ENCODE measurements at regions of chrX and their contacts with region 1.

Region 1: GRCh38 chrX:110060846-110061537 is 58.1 kb downstream of the TMEM164 start:
- DNase-seq: no peak
- H3K4me3 ChIP-seq: no peak overlapping the region
- H3K27ac ChIP-seq: no peak overlapping the region
- H3K4me1 ChIP-seq: no peaks in the 10 kb centered on the region
- H3K27me3 ChIP-seq: no peaks in the 10 kb centered on the region
- CTCF ChIP-seq: no peak

Region 2: DNA sequence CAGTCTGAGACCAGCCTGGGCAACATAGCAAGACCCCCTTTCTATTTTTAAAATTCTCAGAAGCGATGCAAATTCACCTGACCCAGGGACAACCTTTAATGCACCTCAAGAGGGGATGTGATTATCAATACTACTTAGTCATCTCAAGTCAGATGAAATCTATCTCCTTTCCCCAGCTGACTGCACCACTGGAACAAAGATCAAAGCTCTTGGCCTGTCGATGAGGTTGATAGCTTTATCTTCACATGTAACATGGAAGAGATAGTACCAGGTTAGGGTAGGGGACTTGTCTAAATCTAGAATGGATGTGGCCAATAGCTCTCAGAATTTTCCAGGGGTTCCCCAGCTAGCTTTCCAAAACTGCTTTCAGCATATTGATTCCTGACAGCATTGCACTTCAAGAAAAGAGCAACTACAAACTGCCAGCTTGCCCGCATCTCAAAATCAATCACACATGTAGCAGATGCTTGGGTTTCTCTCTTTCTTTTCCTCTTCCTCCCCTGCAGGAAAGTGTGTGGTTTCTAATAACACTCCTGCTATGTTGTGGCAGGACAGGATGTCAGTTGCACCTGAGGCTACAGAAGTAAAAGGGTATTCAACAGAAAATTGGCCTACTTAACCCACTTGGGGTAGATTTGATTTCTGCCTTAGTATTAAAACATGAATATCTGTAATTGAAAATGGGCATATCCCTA is 70.3 kb before region 1 on chrX:
- CTCF ChIA-PET with region 1: no interaction called
- dilution Hi-C with region 1: no loop called
- in situ Hi-C with region 1: no loop called
- intact Hi-C with region 1: no loop called
- DNase-seq: no peak
- H3K4me3 ChIP-seq: no peak overlapping the region
- H3K27ac ChIP-seq: no peak overlapping the region
- H3K4me1 ChIP-seq: peaks cover 4% of the 10 kb centered on the region
- H3K27me3 ChIP-seq: no peaks in the 10 kb centered on the region
- CTCF ChIP-seq: no peak

Region 3: DNA sequence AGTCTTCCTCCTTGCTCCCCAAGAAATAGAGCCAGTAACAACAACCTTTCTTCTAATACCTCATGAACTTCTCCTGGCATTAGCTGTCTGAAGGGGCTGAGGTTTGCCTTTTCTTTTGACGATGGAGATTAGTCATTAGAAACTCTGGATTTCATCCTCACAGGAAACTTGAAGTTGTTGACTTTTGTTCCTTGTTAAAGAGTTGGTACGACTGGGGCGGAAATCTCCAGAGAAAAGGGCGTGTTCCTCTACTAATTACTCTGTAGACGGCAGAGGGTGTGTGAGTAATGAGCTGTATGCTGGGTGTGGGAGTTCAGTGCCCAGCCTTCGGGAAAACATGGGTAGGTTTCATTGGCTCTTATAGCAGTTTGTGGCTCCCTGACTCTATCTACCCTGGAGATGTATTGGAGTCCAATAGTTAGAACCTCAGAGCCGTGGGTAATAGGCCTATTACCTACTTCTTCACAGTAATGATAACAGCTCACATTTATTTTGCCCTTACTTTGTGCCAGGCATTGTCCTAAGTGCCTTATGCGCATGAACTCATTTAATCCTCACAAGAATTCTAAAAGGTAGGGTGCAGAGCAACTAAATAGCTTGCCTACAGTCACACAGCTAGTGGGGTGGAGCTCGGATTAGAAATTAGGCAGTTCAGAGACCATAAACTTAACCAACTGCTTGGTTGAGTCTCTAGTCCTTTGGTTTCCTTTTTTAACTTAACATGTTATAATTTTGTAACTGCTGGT is 34.7 kb before region 1 on chrX:
- CTCF ChIA-PET with region 1: no interaction called
- dilution Hi-C with region 1: loop called (anchors 5 kb)
- in situ Hi-C with region 1: no loop called
- intact Hi-C with region 1: no loop called
- DNase-seq: peak; percentile 85
- H3K4me3 ChIP-seq: no peak overlapping the region
- H3K27ac ChIP-seq: peak overlapping the region; percentile 76
- H3K4me1 ChIP-seq: peaks cover 14% of the 10 kb centered on the region
- H3K27me3 ChIP-seq: no peaks in the 10 kb centered on the region
- CTCF ChIP-seq: no peak

Measured in mammary epithelial cell (primary cell).